CD4-positive, alpha-beta memory T cell (primary cell): ENCODE measurements at regions of chr1 and their contacts with region 1.

Region 1: DNA sequence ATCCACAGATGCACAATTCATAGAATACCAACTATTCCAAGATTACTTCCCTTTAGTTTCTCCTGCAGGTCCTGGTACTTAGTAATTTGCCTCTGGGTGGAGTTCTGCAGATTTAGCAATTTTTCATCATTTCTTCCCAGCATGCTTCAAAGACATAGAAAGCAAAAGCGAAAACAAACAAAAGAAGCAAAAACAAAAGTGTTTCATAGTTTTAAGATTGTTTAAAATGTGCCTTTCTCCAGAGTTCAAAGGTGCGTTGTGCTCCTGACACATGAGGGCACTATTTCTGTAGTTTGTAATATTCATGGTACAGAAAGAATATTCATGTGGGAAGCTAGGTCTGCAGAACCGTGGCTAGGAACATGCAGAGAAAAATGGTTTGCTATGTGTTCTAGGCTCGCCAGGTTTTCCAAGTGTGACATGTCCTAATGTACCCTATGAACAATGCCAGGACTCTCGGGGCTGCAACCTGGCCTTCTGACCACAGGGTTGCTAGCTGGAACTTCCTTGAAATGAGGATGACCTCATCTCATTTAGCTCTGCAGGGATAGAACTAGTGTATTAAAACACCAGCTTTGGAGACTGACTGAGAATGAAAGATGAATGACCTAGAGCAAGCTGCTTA is 30.0 kb upstream of the RCSD1 start:
- DNase-seq: peak; percentile 56 to 74 (median 65)
- H3K4me3 ChIP-seq: no peak overlapping the region
- H3K4me3 Mint-ChIP-seq: peak overlapping the region in 7 of 8 donors; percentile 23 to 82 (median 57)
- H3K27ac ChIP-seq: no peak overlapping the region
- H3K27ac Mint-ChIP-seq: peak overlapping the region; percentile 25 to 62 (median 40)
- H3K4me1 ChIP-seq: peaks cover 39% of the 10 kb centered on the region
- H3K4me1 Mint-ChIP-seq: peaks cover 31 to 47% (median 41%) of the 10 kb centered on the region in 4 donors
- H3K27me3 ChIP-seq: no peaks in the 10 kb centered on the region
- H3K27me3 Mint-ChIP-seq: no peaks in the 10 kb centered on the region

Region 2: DNA sequence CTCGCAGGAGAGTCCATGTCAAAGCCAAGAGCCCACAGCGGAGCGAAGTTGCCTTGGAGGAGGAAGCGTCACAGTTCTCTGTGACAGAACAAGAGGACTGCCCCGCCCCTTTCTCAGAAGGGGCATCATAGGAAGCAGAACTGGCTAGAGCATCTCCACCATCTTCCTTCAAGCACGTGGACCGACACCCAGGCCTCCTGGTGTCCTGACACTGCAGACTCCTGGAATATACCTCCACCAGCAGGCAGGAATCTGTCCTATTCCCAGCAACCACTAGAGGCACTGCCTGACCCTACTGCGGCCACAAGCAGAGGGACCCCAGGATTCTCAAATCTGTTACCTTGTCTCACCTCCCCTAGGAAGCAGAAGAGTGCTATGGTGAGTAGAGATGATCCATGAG is 547.7 kb before region 1 on chr1:
- CTCF ChIA-PET with region 1: no interaction called
- POLR2A ChIA-PET with region 1: no interaction called
- intact Hi-C with region 1: no loop called
- DNase-seq: no peak
- H3K4me3 ChIP-seq: no peak overlapping the region
- H3K4me3 Mint-ChIP-seq: no peak overlapping the region
- H3K27ac ChIP-seq: no peak overlapping the region
- H3K27ac Mint-ChIP-seq: no peak overlapping the region
- H3K4me1 ChIP-seq: no peaks in the 10 kb centered on the region
- H3K4me1 Mint-ChIP-seq: no peaks in the 10 kb centered on the region
- H3K27me3 ChIP-seq: no peaks in the 10 kb centered on the region
- H3K27me3 Mint-ChIP-seq: no peaks in the 10 kb centered on the region

Region 3: GRCh38 chr1:167538656-167539055 is 61.4 kb before region 1 on chr1:
- CTCF ChIA-PET with region 1: no interaction called
- POLR2A ChIA-PET with region 1: no interaction called
- intact Hi-C with region 1: no loop called
- DNase-seq: no peak
- H3K4me3 ChIP-seq: no peak overlapping the region
- H3K4me3 Mint-ChIP-seq: no peak overlapping the region
- H3K27ac ChIP-seq: no peak overlapping the region
- H3K27ac Mint-ChIP-seq: peak overlapping the region in 1 of 7 donors; percentile 15
- H3K4me1 ChIP-seq: peaks cover 6% of the 10 kb centered on the region
- H3K4me1 Mint-ChIP-seq: peaks cover 8 to 14% (median 13%) of the 10 kb centered on the region in 4 donors
- H3K27me3 ChIP-seq: no peaks in the 10 kb centered on the region
- H3K27me3 Mint-ChIP-seq: no peaks in the 10 kb centered on the region

Region 4: DNA sequence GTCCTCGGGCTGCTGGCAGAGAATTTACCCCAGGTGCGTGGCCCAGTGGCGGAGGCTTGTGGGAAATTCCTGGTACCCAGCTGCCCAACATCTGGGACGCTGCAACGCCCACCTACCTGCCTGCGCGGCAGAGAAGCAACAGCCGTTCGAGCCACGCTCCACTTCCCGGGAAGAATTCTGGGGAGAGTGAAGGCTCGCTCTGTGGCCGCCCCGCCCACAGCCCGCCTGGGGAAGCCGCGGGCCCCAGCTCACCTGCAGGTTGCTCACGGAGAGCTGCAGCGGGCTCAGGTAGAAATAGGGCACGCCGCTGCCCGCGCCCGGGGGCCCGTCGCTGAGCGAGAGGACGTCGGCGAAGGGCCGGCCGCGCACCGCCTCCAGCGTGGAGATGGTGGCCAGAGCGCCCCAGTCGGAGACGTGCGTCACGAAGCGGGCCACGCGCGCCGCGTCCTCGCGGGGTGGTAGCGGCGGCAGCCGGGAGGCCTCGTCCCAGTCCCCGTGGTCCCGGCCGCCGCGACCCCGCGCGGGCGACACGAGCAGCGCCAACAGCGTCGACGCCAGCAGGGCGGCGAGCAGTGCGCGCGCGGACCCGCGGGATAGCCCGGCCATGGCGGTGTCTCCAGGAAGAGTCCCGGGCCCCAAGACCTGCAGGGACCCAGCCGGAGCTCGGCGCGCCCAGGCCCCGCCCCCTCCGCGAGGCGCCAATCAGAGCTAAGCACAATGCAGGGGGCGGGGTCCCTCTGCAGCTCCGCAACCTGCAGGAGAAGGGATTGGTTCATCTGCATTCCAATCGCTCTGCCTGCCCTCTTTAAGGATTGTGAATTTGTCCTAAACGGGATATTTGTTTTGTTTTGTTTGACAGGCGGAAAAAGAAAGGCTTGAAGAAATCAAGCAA is 46.7 kb before region 1 on chr1 and contains the start of gene CREG1:
- CTCF ChIA-PET with region 1: interaction called, 10 read pairs
- POLR2A ChIA-PET with region 1: interaction called, 3 read pairs
- intact Hi-C with region 1: no loop called
- DNase-seq: peak; percentile 85 to 93 (median 87)
- H3K4me3 ChIP-seq: peak within 1 kb of the TSS; percentile 74 to 77
- H3K4me3 Mint-ChIP-seq: peak within 1 kb of the TSS; percentile 87 to 94 (median 90)
- H3K27ac ChIP-seq: peak within 1 kb of the TSS; percentile 41
- H3K27ac Mint-ChIP-seq: peak within 1 kb of the TSS; percentile 36 to 89 (median 84)
- H3K4me1 ChIP-seq: peaks cover 30% of the 10 kb centered on the region
- H3K4me1 Mint-ChIP-seq: peaks cover 23 to 56% (median 39%) of the 10 kb centered on the region in 4 donors
- H3K27me3 ChIP-seq: no peaks in the 10 kb centered on the region
- H3K27me3 Mint-ChIP-seq: peaks cover 0 to 3% of the 10 kb centered on the region in 2 donors
- total RNA-seq, gene CREG1: 21.0 to 21.7 TPM

Region 5: DNA sequence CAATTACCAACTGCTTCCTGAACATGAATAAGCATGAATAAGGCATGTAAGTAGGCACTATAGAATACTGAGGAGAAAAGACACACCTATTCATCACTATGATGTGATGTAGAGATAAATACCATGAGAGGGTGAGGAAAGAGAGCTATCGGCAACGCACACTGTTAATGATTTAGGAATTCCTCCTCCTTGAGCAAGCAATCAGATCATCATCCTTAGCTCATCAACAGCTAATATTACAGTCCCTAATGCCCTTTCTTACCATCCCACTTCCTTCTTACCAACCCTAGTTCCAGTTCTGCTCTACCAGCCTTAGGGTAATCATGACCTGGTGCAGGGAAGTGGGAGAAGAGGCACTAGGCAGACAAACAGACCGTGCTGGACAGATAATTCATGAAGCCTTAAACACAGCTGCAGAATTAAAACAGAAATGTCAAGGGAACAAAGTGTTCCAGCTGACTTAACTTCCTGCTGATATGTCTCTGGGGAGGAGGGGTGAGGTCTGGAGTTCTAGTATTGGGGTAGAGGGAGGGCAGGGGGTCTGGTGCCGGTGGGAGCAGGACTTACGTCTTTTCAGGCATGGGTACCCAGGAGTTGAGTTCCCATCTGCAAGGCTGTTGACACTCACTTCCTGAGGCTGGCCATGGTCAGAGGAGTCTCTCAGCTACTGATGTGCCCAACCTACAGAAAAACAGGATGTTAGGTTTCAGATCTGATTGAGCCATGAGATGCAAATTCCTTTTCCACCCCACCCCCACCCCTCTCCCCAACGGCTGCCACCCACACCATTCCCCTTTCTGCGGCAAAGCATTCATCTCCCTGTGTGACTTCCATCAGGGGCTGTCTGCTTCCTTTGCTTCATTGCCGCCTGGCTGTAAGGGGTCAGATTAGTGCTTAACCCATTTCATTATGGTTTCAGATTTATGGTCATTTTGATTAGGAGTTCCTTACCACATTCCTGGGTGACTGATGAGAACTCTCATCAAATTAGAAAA is 17.4 kb after region 1 on chr1:
- CTCF ChIA-PET with region 1: interaction called, 64 read pairs
- POLR2A ChIA-PET with region 1: interaction called, 25 read pairs
- intact Hi-C with region 1: no loop called
- DNase-seq: no peak
- H3K4me3 ChIP-seq: peak overlapping the region in 1 of 2 donors; percentile 29
- H3K4me3 Mint-ChIP-seq: peak overlapping the region; percentile 55 to 90 (median 80)
- H3K27ac ChIP-seq: peak overlapping the region; percentile 35
- H3K27ac Mint-ChIP-seq: peak overlapping the region; percentile 77 to 93 (median 88)
- H3K4me1 ChIP-seq: peaks cover 60% of the 10 kb centered on the region
- H3K4me1 Mint-ChIP-seq: peaks cover 44 to 75% (median 59%) of the 10 kb centered on the region in 4 donors
- H3K27me3 ChIP-seq: no peaks in the 10 kb centered on the region
- H3K27me3 Mint-ChIP-seq: no peaks in the 10 kb centered on the region

Region 6: DNA sequence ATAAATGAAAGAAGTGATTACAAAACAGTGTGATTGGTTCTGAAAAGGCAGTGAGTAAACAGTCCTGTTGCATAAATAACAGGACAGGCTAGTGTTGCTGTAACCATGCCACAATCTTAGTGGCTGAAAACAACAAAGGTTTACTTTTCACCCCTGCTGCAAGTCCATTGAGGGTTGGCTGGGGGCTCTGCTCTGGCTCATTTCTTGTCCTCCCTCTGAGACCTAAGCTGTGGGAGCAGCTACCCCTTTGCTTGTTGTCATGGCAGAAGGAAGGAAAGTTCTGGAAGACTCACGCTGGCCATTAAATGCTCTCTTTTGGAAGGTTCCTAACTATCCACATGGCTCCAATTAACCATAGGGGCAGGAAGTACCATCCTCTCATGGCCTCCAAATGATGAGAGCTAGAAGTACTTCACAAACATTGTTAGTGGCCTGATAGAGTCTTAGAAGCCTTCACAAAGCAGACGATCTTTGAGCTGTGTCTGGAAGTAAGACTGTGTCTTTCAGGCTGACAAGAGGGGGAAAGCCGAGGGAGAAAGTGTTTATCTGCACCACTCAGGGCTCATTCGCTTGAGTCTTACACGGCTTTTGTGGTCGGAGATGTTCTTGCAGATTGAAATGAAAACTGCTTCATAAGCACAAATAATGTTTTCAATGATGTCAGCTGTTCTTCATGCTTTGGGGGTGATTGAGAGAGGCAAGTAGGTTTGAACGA is 41.9 kb after region 1 on chr1:
- CTCF ChIA-PET with region 1: interaction called, 406 read pairs
- POLR2A ChIA-PET with region 1: interaction called, 255 read pairs
- intact Hi-C with region 1: loop called (anchors 1 kb)
- DNase-seq: peak in 4 of 5 donors; percentile 33 to 69 (median 51)
- H3K4me3 ChIP-seq: no peak overlapping the region
- H3K4me3 Mint-ChIP-seq: peak overlapping the region; percentile 43 to 81 (median 58)
- H3K27ac ChIP-seq: peak overlapping the region; percentile 39
- H3K27ac Mint-ChIP-seq: peak overlapping the region; percentile 53 to 91 (median 85)
- H3K4me1 ChIP-seq: peaks cover 99% of the 10 kb centered on the region
- H3K4me1 Mint-ChIP-seq: peaks cover 68 to 100% (median 90%) of the 10 kb centered on the region in 4 donors
- H3K27me3 ChIP-seq: no peaks in the 10 kb centered on the region
- H3K27me3 Mint-ChIP-seq: no peaks in the 10 kb centered on the region

Region 7: GRCh38 chr1:167669209-167670124 is 69.4 kb after region 1 on chr1:
- CTCF ChIA-PET with region 1: interaction called, 13 read pairs
- POLR2A ChIA-PET with region 1: interaction called, 10 read pairs
- intact Hi-C with region 1: no loop called
- DNase-seq: no peak
- H3K4me3 ChIP-seq: no peak overlapping the region
- H3K4me3 Mint-ChIP-seq: peak overlapping the region in 2 of 8 donors; percentile 34 to 60
- H3K27ac ChIP-seq: peak overlapping the region; percentile 9
- H3K27ac Mint-ChIP-seq: peak overlapping the region in 5 of 7 donors; percentile 78 to 92 (median 83)
- H3K4me1 ChIP-seq: peaks cover 93% of the 10 kb centered on the region
- H3K4me1 Mint-ChIP-seq: peaks cover 76 to 99% (median 85%) of the 10 kb centered on the region in 4 donors
- H3K27me3 ChIP-seq: no peaks in the 10 kb centered on the region
- H3K27me3 Mint-ChIP-seq: no peaks in the 10 kb centered on the region

Region 8: DNA sequence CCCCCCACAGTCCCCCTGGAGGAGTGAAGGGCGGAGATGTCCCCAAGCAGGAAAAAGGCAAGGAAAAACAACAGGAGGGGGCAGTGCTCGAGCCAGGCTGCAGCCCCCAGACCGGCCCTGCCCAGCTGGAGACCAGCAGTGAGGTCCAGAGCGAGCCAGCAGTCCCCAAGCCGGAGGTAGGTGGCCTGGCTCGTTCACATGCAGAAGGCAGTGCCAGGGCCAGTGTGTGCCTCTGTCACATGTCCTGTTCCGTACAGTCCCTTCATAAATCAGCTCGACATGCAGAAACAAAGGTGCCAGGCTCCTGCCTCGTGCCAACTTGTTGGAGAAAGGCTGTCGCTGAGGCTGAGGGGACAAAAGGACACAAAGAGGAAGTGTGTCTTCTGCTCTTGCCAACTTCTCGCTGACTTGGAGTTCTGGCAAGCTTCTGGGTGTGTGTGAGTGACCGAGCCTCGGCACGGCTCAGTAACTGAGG is 97.6 kb after region 1 on chr1:
- CTCF ChIA-PET with region 1: interaction called, 10 read pairs
- POLR2A ChIA-PET with region 1: no interaction called
- intact Hi-C with region 1: no loop called
- DNase-seq: no peak
- H3K4me3 ChIP-seq: no peak overlapping the region
- H3K4me3 Mint-ChIP-seq: no peak overlapping the region
- H3K27ac ChIP-seq: no peak overlapping the region
- H3K27ac Mint-ChIP-seq: peak overlapping the region in 4 of 7 donors; percentile 3 to 54 (median 23)
- H3K4me1 ChIP-seq: no peaks in the 10 kb centered on the region
- H3K4me1 Mint-ChIP-seq: peaks cover 0 to 19% (median 7%) of the 10 kb centered on the region in 4 donors
- H3K27me3 ChIP-seq: no peaks in the 10 kb centered on the region
- H3K27me3 Mint-ChIP-seq: no peaks in the 10 kb centered on the region

Region 9: GRCh38 chr1:167803358-167804207 is 203.5 kb after region 1 on chr1:
- CTCF ChIA-PET with region 1: interaction called, 7 read pairs
- POLR2A ChIA-PET with region 1: no interaction called
- intact Hi-C with region 1: loop called (anchors 1 kb)
- DNase-seq: peak; percentile 70 to 81 (median 73)
- H3K4me3 ChIP-seq: no peak overlapping the region
- H3K4me3 Mint-ChIP-seq: peak overlapping the region in 7 of 8 donors; percentile 35 to 70 (median 57)
- H3K27ac ChIP-seq: no peak overlapping the region
- H3K27ac Mint-ChIP-seq: peak overlapping the region in 5 of 7 donors; percentile 6 to 87 (median 62)
- H3K4me1 ChIP-seq: peaks cover 26% of the 10 kb centered on the region
- H3K4me1 Mint-ChIP-seq: peaks cover 23 to 34% (median 26%) of the 10 kb centered on the region in 4 donors
- H3K27me3 ChIP-seq: no peaks in the 10 kb centered on the region
- H3K27me3 Mint-ChIP-seq: peaks cover 2% of the 10 kb centered on the region in 2 donors